GM13977 (cell line): ENCODE measurements at regions of chr7 and their contacts with region 1.

Region 1: DNA sequence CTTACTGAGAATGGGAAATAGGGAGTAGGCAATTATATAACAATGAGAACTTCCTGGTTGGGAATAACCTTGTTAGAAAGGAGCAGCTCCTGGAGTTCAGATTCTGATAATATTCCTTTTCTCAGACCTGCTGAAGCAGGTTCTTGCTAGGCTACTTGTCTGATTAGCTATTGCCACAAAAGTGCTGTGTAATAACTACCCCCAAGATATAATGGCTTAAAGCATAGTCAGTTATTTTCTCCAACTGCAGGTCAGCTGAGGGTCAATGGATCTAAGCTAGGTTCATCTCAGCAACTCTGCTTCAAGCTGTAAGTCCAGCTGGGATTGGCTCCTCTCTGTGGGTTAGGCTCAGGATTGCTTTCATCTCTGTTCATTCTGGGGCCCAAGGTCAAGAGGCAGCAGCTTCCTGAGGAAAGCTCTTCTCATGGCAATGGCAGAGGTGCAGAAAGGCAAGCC is 9.4 kb upstream of the CNOT4 start:
- DNase-seq: no peak
- CTCF ChIP-seq: no peak

Region 2: GRCh38 chr7:135251496-135252391 is 267.5 kb before region 1 on chr7:
- in situ Hi-C with region 1: no loop called
- DNase-seq: no peak
- CTCF ChIP-seq: no peak

Region 3: DNA sequence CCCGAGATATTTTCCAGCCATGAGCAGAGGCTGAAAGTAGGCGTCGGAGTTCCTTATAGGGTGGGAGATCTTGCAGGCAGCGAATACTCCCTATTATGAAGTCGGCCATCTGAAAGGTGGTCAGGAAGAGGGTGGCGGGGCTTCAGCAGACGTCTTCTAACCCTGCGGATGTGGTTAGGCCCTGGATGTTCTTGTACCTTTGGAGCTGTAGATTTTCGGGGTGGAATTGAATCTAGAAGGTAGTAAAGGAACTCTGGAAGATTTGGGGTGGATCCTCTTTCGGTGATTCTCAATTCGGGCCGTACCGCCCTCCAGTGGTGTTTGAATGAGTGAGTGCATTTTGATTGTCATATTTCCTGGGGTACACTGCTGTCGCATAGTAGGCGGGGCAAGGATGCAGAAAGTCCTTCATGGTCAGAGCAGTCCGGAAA is 39.1 kb after region 1 on chr7:
- in situ Hi-C with region 1: loop called (anchors 5 kb)
- DNase-seq: peak; percentile 70
- CTCF ChIP-seq: peak; percentile 68

Region 4: DNA sequence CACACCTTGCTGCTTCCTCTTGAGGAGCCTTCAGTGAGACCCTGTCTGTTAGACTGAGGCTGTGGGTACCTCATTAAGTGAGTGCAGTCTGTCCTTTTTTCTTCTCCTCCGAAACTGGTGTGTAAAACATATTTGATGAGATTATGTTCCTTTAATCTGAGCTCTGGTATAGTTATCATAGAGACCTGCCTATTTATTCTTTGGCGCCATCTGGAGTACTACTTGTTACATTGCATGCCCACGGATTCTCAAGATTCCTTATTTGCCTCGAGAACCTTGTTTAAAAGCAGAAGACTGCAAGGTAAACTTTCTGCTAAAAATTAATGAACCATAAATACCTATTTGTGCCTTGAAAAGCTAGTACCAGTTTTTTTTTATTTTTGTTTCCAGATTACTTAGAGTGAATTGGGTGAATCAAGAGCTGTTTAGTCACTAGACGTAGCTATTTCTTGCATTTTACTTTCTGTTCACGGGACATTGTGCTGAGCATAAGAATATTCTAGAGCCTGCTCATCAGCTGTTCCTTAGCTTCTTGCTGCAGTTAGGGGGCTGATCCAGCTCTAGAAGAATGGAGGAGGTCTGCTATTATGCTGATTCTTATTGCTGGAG is 126.1 kb after region 1 on chr7:
- in situ Hi-C with region 1: no loop called
- DNase-seq: no peak
- CTCF ChIP-seq: peak; percentile 56

Region 5: GRCh38 chr7:135782377-135782776 is 263.1 kb after region 1 on chr7:
- in situ Hi-C with region 1: no loop called
- DNase-seq: no peak
- CTCF ChIP-seq: no peak